Body of pancreas (tissue), 4 donors: ENCODE measurements at regions of chr4 and their contacts with region 1.

Region 1: DNA sequence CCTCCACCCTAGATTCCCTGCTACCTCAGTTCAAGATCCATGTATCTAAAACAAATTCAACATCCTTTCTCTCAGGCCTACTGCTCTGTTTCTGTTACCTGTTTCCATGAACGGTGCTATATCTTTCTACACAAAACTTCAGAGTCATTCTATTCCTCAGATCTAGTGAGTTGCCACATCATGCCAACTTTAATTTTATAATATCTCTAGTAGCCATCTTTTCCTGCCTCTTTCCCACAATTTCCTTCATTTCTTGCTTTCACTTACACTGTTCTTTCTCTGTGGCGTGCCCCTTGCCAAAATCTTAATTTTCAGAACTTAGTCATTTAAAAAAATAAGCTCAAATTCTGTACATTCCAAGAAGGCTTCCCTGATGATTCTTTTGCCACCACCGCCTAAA is 15.2 kb downstream of the GUCY1A1 start:
- DNase-seq: no peak
- ATAC-seq: no peak
- H3K4me3 ChIP-seq: no peak overlapping the region
- H3K27ac ChIP-seq: peak overlapping the region in 1 of 4 donors; percentile 5
- H3K4me1 ChIP-seq: no peaks in the 10 kb centered on the region
- H3K27me3 ChIP-seq: no peaks in the 10 kb centered on the region
- CTCF ChIP-seq: no peak
- POLR2A ChIP-seq: no peak

Region 2: GRCh38 chr4:155522201-155522600 is 159.7 kb before region 1 on chr4:
- intact Hi-C with region 1: no loop called
- DNase-seq: no peak
- ATAC-seq: no peak
- H3K4me3 ChIP-seq: no peak overlapping the region
- H3K27ac ChIP-seq: no peak overlapping the region
- H3K4me1 ChIP-seq: peaks cover 8% of the 10 kb centered on the region
- H3K27me3 ChIP-seq: no peaks in the 10 kb centered on the region
- CTCF ChIP-seq: no peak
- POLR2A ChIP-seq: no peak

Region 3: DNA sequence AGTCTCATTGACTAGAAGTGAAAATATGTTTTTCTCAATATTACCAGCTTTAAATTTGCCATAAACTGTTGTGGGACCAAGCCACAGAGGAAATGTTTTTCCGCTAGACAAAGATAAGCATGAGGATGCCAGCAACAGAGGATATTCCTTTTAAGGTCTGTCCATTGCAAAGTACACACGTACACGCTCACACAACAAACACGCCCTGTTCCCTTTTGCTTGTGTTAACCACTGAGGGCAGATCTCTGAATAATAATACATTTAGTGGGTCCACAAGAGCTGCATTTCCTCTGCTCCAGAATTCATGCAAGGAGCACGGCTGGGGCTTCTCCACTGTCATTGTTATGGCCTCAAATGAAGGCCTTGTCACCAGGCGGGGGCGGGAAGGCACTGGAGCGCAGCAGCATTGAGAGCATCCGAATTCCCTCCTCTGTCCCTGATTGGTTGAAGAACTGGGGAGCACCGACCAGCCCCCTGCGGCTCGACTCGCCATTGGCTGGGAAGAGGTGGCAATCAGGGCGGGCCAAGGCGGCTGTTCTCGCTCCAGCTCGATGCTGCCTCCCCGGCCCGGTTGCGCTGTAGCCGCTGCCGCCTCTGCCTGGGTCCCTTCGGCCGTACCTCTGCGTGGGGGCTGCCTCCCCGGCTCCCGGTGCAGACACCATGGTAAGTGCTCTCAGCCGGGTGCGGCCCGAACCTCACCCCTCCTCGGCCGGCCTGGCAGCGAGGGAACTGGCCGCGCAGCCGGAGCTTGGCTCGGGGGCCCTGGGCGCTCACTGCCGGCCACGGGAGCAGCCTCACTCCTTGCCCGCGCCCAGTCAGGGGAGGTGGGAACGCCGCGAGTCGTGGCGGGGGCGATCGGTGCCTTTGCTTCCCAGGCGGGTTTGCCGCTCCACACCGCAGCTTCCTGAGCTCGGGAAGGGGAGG is 76.9 kb after region 1 on chr4 and contains the start of gene GUCY1B1:
- intact Hi-C with region 1: loop called (anchors 5 kb)
- DNase-seq: peak; percentile 91 to 94 (median 92)
- ATAC-seq: peak; percentile 98
- H3K4me3 ChIP-seq: peak within 1 kb of the TSS; percentile 51 to 69
- H3K27ac ChIP-seq: peak within 1 kb of the TSS; percentile 70 to 88 (median 82)
- H3K4me1 ChIP-seq: no peaks in the 10 kb centered on the region
- H3K27me3 ChIP-seq: no peaks in the 10 kb centered on the region
- CTCF ChIP-seq: peak; percentile 16 to 60 (median 40)
- POLR2A ChIP-seq: peak in 2 of 3 donors; percentile 68 to 71
- total RNA-seq, gene GUCY1B1: 9.6 to 11.9 TPM